Sciatic nerve (tissue), 2 donors: ENCODE measurements at regions of chr12 and their contacts with region 1.

Region 1: DNA sequence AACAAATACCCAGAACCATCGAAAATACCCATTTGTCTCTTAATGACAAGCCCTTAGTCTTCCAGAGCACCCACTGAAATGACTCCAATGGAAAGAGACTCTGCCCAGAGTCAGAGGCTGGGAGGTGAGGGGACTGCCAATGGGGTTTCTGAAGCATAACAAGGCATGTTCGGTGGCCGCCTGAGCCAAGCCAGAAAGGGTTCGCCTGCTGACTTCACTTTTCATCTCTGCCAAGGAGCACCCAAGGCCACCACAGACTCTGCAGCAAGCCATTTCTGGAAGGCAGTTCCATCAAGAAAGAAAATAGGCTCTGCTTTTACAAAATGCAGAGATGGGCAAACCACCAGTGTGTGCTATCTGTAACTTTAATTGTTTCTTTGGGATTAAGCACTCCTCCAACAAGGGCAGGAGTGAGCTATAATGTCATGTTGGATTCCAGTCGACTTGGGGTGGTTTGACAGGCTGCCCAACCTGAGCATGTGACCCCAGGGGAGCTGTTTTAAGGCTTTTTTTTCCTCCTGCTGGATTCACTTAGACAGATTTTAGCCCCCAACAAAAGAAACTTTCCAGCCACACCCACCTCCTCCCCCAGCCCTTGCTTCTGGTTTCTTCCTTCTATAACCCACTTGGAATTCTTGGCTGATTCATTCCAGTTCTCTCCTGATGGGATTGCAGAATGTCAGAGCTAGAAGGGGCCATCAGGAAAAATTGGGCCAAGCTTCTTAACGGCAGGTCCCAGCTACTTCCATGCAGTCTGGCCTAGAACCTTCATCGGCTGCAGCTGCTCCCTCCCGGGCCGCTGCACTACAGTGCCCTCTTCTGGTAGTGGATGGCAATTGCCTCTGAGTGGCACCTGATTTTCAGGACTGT is 24.1 kb downstream of the CKAP4 start:
- DNase-seq: peak; percentile 84
- ATAC-seq: peak; percentile 82

Region 2: DNA sequence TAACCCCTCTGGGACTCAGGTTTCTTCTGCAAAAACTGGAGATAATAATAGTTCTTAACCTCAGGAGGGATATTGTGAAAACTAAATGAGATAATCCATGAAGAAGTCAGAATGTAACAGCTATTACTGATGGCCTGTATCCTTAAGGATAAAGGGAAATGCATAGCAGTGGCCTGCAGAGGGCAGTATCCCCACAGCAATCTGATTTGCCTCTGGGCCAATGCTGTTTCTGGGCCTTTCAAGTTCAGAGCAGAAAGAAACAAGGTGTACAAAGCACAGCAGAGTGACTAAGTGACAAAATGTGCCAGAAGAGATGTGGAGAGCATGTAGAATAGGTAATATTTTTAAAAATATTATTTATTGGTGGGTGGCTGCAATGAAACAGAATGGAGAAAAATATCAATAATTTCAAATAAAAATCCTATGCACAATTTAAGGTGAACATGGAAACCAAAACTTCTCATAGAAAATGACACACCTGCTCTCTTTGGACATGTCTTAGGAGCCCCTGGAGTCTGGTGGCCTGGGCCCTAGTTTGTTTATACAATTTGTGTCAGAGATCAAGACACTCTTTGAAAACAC is 803.0 kb before region 1 on chr12:
- intact Hi-C with region 1: loop called (anchors 10 kb)
- DNase-seq: peak; percentile 88
- ATAC-seq: peak; percentile 94

Region 3: DNA sequence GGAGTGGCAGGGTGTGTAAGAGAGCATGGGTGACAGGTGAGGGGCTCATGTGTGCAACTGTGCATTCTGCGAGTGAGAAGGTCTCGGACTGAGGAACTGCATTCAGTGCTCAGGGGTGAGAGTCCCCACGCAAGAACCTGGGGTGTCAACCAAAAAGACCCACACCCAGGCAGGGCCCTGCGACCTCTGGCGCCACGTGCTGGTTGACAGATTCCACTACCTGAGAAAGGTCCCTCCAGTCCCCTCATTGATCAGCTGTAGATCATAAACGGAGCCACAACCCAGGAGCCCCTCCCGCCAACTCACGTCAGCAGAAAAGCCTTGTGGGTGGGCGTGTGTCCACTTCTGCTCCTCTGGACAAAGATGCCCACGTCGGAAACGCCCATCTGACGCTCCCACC is 1649.5 kb after region 1 on chr12:
- intact Hi-C with region 1: no loop called
- DNase-seq: no peak
- ATAC-seq: no peak